Ascending aorta (tissue), 2 donors: ENCODE measurements at regions of chr17 and their contacts with region 1.

Region 1: GRCh38 chr17:75784473-75785015 is at the start of gene UNK:
- DNase-seq: peak; percentile 94 to 99
- H3K4me3 ChIP-seq: peak within 1 kb of the TSS; percentile 72 to 73
- H3K27ac ChIP-seq: peak within 1 kb of the TSS; percentile 99
- H3K4me1 ChIP-seq: peaks cover 4 to 33% of the 10 kb centered on the region in 2 donors
- H3K27me3 ChIP-seq: no peaks in the 10 kb centered on the region
- CTCF ChIP-seq: no peak
- total RNA-seq, gene UNK: 73.9 TPM

Region 2: DNA sequence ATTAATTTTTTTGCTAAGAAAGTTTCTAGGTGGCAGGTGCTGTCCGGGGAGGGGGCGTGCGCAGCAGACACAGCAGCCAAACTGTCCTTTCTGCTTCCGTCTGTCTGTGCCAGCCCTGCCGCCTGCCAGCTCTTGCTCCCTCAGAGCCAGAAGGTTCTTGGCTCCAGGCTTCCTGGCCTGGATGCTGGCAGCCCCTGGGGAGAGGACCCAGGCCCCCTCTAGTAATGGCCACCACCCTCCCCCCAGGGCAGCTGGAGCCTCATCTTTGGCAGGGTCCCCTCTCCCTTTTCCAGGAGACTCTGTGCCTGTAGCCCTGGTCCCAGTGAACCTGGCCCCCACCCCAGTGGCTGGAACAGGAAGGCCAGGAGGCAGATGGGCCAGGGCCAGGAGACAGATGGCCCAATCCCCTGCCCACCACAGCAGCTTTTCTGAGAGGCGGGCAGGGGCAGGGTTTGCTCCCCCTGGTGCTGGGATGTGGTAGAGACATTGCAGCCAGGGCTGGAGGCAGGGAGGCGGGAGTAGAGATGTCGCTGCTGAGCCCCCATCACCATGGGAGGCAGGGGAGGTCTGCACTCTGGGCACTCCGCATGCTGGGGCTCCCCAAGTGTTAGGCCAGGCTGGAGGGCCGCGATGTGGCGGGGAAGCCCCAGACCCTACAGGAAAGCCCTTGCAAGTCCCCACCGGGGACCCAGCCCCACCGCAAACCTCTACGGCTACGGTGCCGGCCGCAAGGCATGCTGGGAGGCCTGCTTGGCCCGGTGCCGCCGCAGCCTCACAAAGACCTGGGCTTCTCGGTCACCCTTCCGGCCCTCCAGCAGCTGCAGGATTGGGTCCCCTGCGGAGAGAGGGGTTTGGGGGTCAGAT is 42.9 kb after region 1 on chr17:
- intact Hi-C with region 1: loop called (anchors 2 kb)
- DNase-seq: peak in 1 of 2 donors; percentile 80
- H3K4me3 ChIP-seq: peak overlapping the region in 1 of 2 donors; percentile 47
- H3K27ac ChIP-seq: peak overlapping the region; percentile 88
- H3K4me1 ChIP-seq: peaks cover 11 to 13% of the 10 kb centered on the region in 2 donors
- H3K27me3 ChIP-seq: no peaks in the 10 kb centered on the region
- CTCF ChIP-seq: peak; percentile 70

Region 3: GRCh38 chr17:75842423-75842822 is 57.9 kb after region 1 on chr17:
- intact Hi-C with region 1: no loop called
- DNase-seq: no peak
- H3K4me3 ChIP-seq: no peak overlapping the region
- H3K27ac ChIP-seq: no peak overlapping the region
- H3K4me1 ChIP-seq: peaks cover 9 to 18% of the 10 kb centered on the region in 2 donors
- H3K27me3 ChIP-seq: no peaks in the 10 kb centered on the region
- CTCF ChIP-seq: no peak

Region 4: GRCh38 chr17:75855310-75856081 is 71.0 kb after region 1 on chr17 and contains the start of gene WBP2:
- intact Hi-C with region 1: loop called (anchors 2 kb)
- DNase-seq: peak; percentile 99 to 100
- H3K4me3 ChIP-seq: peak within 1 kb of the TSS; percentile 56 to 87
- H3K27ac ChIP-seq: peak within 1 kb of the TSS; percentile 95 to 98
- H3K4me1 ChIP-seq: peaks cover 3 to 17% of the 10 kb centered on the region in 2 donors
- H3K27me3 ChIP-seq: no peaks in the 10 kb centered on the region
- CTCF ChIP-seq: peak; percentile 63 to 84 (median 68)
- total RNA-seq, gene WBP2: 50.7 TPM

Region 5: GRCh38 chr17:75877752-75878173 is 93.2 kb after region 1 on chr17:
- intact Hi-C with region 1: loop called (anchors 1 kb)
- DNase-seq: peak in 1 of 2 donors; percentile 86
- H3K4me3 ChIP-seq: peak overlapping the region; percentile 85 to 96
- H3K27ac ChIP-seq: peak overlapping the region; percentile 96 to 99
- H3K4me1 ChIP-seq: peaks cover 33 to 45% of the 10 kb centered on the region in 2 donors
- H3K27me3 ChIP-seq: no peaks in the 10 kb centered on the region
- CTCF ChIP-seq: peak in 2 of 3 experiments; percentile 48 to 51

Region 6: GRCh38 chr17:75896415-75897159 is 112.0 kb after region 1 on chr17 and contains the start of gene TRIM65:
- intact Hi-C with region 1: loop called (anchors 2 kb)
- DNase-seq: peak; percentile 41 to 94
- H3K4me3 ChIP-seq: peak within 1 kb of the TSS; percentile 87 to 96
- H3K27ac ChIP-seq: peak within 1 kb of the TSS; percentile 92 to 96
- H3K4me1 ChIP-seq: peaks cover 0 to 21% of the 10 kb centered on the region in 2 donors
- H3K27me3 ChIP-seq: no peaks in the 10 kb centered on the region
- CTCF ChIP-seq: peak; percentile 56 to 64 (median 58)
- total RNA-seq, gene TRIM65: 43.3 TPM